Activated B cell treated with CpG ODN at 0.5 μM for 24 hours (primary cell): ENCODE measurements at regions of chr11 and their contacts with region 1.

Region 1: GRCh38 chr11:62841361-62842184 is 2.2 kb upstream of the WDR74 start:
- DNase-seq: peak; percentile 79
- ATAC-seq: peak; percentile 72
- H3K4me3 Mint-ChIP-seq: no peak overlapping the region
- H3K27ac Mint-ChIP-seq: no peak overlapping the region
- H3K4me1 Mint-ChIP-seq: peaks cover 28% of the 10 kb centered on the region
- H3K27me3 Mint-ChIP-seq: no peaks in the 10 kb centered on the region
- CTCF ChIP-seq: no peak

Region 2: GRCh38 chr11:62556108-62556871 is 285.3 kb before region 1 on chr11:
- CTCF ChIA-PET with region 1: no interaction called
- POLR2A ChIA-PET with region 1: interaction called, 27 read pairs
- intact Hi-C with region 1: loop called (anchors 5 kb)
- DNase-seq: peak; percentile 64
- ATAC-seq: peak; percentile 35
- H3K4me3 Mint-ChIP-seq: peak overlapping the region; percentile 81
- H3K27ac Mint-ChIP-seq: peak overlapping the region; percentile 99
- H3K4me1 Mint-ChIP-seq: peaks cover 87% of the 10 kb centered on the region
- H3K27me3 Mint-ChIP-seq: no peaks in the 10 kb centered on the region
- CTCF ChIP-seq: no peak

Region 3: DNA sequence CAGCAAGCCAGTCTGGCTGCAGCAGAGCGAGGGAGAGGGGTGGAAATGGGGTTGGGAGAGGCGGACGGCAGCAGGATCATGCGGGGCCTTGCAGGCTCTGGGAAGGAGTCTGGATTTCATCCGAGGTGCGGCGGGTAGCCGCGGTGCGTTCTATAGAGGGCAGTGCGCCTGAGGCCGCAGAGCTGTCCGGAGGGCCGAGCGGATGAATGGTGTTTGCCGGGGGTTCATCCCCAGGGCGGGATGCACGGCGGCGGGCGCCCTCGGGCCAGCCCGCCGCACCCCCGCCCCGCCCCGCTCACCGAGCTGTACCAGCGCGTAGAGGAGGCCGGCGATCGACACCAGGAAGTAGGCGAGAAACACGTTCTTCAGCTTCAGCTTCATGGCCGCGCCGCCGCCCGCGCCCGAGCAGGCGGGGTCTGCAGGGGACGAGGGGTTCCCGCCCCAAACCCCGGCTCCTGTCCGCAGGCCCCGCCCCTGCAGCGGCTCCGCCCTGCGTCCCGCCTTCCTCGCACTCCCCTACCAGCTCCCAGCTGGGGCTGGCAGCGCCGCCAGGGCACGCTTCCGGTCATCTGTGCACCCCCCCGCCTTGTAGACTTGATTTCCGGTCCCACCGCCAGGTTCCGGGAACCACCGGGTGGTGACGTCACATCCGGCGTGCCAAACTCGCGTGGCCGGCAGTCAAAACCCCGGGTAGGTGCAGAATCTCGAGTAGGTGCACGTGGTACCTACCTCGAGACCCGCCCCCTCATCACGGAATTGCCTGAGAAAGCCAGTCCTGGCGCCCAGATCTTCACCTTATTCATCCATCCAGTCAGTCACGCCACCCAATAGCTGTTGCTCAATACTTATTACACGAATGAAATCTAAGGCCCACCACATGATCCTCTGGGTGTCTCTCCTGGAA is 219.8 kb before region 1 on chr11 and contains the start of gene B3GAT3:
- CTCF ChIA-PET with region 1: no interaction called
- POLR2A ChIA-PET with region 1: interaction called, 20 read pairs
- intact Hi-C with region 1: no loop called
- DNase-seq: peak; percentile 93
- ATAC-seq: peak; percentile 92
- H3K4me3 Mint-ChIP-seq: peak within 1 kb of the TSS; percentile 90
- H3K27ac Mint-ChIP-seq: peak within 1 kb of the TSS; percentile 93
- H3K4me1 Mint-ChIP-seq: peaks cover 19% of the 10 kb centered on the region
- H3K27me3 Mint-ChIP-seq: no peaks in the 10 kb centered on the region
- CTCF ChIP-seq: no peak
- total RNA-seq, gene B3GAT3: 48.8 and 56.6 TPM in 2 replicates

Region 4: DNA sequence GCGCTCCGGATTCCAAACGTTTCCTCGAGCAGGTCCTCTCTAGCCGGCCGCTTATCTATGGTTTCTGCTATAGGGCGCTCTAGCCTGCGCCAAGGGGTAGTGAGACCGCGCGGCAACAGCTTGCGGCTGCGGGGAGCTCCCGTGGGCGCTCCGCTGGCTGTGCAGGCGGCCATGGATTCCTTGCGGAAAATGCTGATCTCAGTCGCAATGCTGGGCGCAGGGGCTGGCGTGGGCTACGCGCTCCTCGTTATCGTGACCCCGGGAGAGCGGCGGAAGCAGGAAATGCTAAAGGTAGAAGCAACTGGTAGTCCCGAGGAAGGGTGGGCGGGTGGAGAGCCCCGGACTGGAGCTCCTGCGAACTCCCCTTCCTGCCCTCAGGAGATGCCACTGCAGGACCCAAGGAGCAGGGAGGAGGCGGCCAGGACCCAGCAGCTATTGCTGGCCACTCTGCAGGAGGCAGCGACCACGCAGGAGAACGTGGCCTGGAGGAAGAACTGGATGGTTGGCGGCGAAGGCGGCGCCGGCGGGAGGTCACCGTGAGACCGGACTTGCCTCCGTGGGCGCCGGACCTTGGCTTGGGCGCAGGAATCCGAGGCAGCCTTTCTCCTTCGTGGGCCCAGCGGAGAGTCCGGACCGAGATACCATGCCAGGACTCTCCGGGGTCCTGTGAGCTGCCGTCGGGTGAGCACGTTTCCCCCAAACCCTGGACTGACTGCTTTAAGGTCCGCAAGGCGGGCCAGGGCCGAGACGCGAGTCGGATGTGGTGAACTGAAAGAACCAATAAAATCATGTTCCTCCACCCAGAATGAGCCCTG is 169.8 kb before region 1 on chr11 and contains the starts of genes LBHD1 and UQCC3:
- CTCF ChIA-PET with region 1: no interaction called
- POLR2A ChIA-PET with region 1: interaction called, 54 read pairs
- intact Hi-C with region 1: loop called (anchors 5 kb)
- DNase-seq: peak; percentile 61
- ATAC-seq: peak; percentile 82
- H3K4me3 Mint-ChIP-seq: peak within 1 kb of the TSS; percentile 100
- H3K27ac Mint-ChIP-seq: peak within 1 kb of the TSS; percentile 98
- H3K4me1 Mint-ChIP-seq: peaks cover 62% of the 10 kb centered on the region
- H3K27me3 Mint-ChIP-seq: no peaks in the 10 kb centered on the region
- CTCF ChIP-seq: no peak
- total RNA-seq, gene LBHD1: 19.1 and 24.9 TPM in 2 replicates
- total RNA-seq, gene UQCC3: 8.3 and 9.4 TPM in 2 replicates

Region 5: GRCh38 chr11:62753736-62754603 is 87.6 kb before region 1 on chr11 and contains the start of gene ZBTB3:
- CTCF ChIA-PET with region 1: no interaction called
- POLR2A ChIA-PET with region 1: interaction called, 160 read pairs
- intact Hi-C with region 1: no loop called
- DNase-seq: peak; percentile 91
- ATAC-seq: peak; percentile 93
- H3K4me3 Mint-ChIP-seq: peak within 1 kb of the TSS; percentile 97
- H3K27ac Mint-ChIP-seq: peak within 1 kb of the TSS; percentile 99
- H3K4me1 Mint-ChIP-seq: peaks cover 22% of the 10 kb centered on the region
- H3K27me3 Mint-ChIP-seq: no peaks in the 10 kb centered on the region
- CTCF ChIP-seq: no peak
- total RNA-seq, gene ZBTB3: 17.6 and 19.9 TPM in 2 replicates

Region 6: GRCh38 chr11:62799486-62799885 is 42.1 kb before region 1 on chr11:
- CTCF ChIA-PET with region 1: no interaction called
- POLR2A ChIA-PET with region 1: interaction called, 123 read pairs
- intact Hi-C with region 1: no loop called
- DNase-seq: no peak
- ATAC-seq: no peak
- H3K4me3 Mint-ChIP-seq: no peak overlapping the region
- H3K27ac Mint-ChIP-seq: no peak overlapping the region
- H3K4me1 Mint-ChIP-seq: peaks cover 19% of the 10 kb centered on the region
- H3K27me3 Mint-ChIP-seq: no peaks in the 10 kb centered on the region
- CTCF ChIP-seq: no peak

Region 7: GRCh38 chr11:62880803-62881578 is 39.4 kb after region 1 on chr11 and contains the start of gene SLC3A2:
- CTCF ChIA-PET with region 1: no interaction called
- POLR2A ChIA-PET with region 1: interaction called, 258 read pairs
- intact Hi-C with region 1: loop called (anchors 1 kb)
- DNase-seq: peak; percentile 86
- ATAC-seq: peak; percentile 80
- H3K4me3 Mint-ChIP-seq: peak within 1 kb of the TSS; percentile 100
- H3K27ac Mint-ChIP-seq: peak within 1 kb of the TSS; percentile 100
- H3K4me1 Mint-ChIP-seq: peaks cover 46% of the 10 kb centered on the region
- H3K27me3 Mint-ChIP-seq: no peaks in the 10 kb centered on the region
- CTCF ChIP-seq: no peak
- total RNA-seq, gene SLC3A2: 270 and 274 TPM in 2 replicates